ENCODE measurements at regions of chrX and their contacts with region 1.

Region 1: DNA sequence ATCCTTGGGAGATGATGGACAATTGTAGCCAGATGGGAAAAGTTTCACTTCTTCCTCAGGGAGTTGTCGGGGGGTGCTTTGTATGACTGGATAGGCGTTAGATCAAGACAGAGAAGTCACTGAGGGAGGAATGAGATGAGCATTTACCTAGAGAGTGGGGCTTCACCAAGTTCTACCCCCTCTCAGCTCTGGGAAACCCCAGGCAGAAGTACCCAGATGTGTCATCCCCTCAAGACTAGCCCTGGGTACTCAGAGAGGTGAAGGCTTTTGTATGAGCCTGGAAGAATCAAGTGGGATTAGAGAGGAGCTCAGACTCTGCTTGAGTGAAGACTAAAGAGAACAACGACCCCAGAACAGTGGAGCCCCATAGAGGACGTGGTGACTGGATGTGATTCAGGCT is 1.9 kb downstream of the MAGEB1 start:
- DNase-seq: no peak
- H3K4me3 ChIP-seq: no peak overlapping the region
- H3K4me3 Mint-ChIP-seq: no peak overlapping the region
- H3K27ac Mint-ChIP-seq: no peak overlapping the region
- H3K4me1 ChIP-seq: no peaks in the 10 kb centered on the region
- H3K4me1 Mint-ChIP-seq: no peaks in the 10 kb centered on the region
- H3K27me3 ChIP-seq: no peaks in the 10 kb centered on the region
- H3K27me3 Mint-ChIP-seq: no peaks in the 10 kb centered on the region
- CTCF ChIP-seq: no peak

Region 2: DNA sequence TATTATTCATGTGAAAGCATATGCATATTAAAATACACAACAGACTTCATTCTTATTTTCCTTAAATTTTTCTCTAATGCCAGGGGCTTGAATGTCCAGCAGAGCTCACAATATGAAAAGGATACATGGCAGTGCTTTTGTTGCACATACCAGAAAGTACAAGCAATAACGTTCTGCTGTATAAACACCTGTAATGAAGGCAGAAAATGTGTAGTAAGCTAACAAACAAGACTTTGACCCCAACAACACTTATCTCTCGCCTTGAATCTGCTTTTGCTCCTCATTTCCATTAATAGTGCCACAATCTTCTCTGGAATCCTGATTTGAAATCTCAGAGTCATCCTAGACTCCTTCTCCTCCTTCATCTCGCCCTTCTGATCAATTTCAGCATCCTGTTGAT is 974.3 kb before region 1 on chrX:
- CTCF ChIA-PET with region 1: interaction called, 11 read pairs
- POLR2A ChIA-PET with region 1: no interaction called
- intact Hi-C with region 1: no loop called
- DNase-seq: no peak
- H3K4me3 ChIP-seq: no peak overlapping the region
- H3K4me3 Mint-ChIP-seq: no peak overlapping the region
- H3K27ac Mint-ChIP-seq: no peak overlapping the region
- H3K4me1 ChIP-seq: no peaks in the 10 kb centered on the region
- H3K4me1 Mint-ChIP-seq: peaks cover 8% of the 10 kb centered on the region
- H3K27me3 ChIP-seq: no peaks in the 10 kb centered on the region
- H3K27me3 Mint-ChIP-seq: no peaks in the 10 kb centered on the region
- CTCF ChIP-seq: no peak